ENCODE measurements at regions of chr2 and their contacts with region 1.

Region 1: DNA sequence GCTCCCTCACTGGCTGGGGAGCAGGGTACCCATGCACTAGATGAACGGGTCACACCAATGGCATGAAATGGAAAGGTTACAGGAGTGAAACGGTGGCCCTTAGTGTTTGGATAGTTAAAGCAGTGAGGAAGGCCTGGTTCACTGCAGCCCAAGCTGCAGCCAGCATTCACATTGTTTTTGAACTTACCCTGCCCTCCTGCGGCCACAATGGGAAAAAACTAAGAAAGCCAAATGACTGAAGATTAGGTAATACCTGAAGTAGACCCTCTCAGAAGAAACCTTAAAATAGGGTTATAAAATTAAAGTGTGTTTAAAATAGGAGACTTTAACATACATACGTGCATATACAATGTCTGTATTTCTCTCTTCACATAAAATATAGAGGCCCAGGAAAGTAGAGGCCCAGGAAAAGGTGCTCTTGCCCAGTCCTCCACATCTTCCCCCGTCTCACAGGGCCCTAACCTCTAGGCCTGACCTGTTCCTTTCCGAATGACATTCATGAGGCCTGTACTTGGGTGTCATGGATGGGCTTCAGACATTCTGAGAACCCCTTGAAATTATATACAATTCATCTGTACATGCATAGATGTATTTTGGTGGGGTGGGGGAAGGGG is 33.3 kb downstream of the DOK1 start:
- DNase-seq: peak; percentile 61
- H3K4me3 Mint-ChIP-seq: no peak overlapping the region
- H3K27ac Mint-ChIP-seq: peak overlapping the region; percentile 59
- H3K4me1 Mint-ChIP-seq: peaks cover 35% of the 10 kb centered on the region
- H3K27me3 Mint-ChIP-seq: peaks cover 15% of the 10 kb centered on the region

Region 2: GRCh38 chr2:74482801-74483674 is 104.7 kb before region 1 on chr2 and contains the starts of genes CCDC142 and TTC31:
- intact Hi-C with region 1: loop called (anchors 1 kb)
- DNase-seq: peak; percentile 91
- H3K4me3 Mint-ChIP-seq: peak within 1 kb of the TSS; percentile 99
- H3K27ac Mint-ChIP-seq: peak within 1 kb of the TSS; percentile 99
- H3K4me1 Mint-ChIP-seq: peaks cover 26% of the 10 kb centered on the region
- H3K27me3 Mint-ChIP-seq: no peaks in the 10 kb centered on the region
- total RNA-seq, gene CCDC142: 25.1 and 26.9 TPM in 2 replicates
- total RNA-seq, gene TTC31: 35.1 and 35.9 TPM in 2 replicates

Region 3: DNA sequence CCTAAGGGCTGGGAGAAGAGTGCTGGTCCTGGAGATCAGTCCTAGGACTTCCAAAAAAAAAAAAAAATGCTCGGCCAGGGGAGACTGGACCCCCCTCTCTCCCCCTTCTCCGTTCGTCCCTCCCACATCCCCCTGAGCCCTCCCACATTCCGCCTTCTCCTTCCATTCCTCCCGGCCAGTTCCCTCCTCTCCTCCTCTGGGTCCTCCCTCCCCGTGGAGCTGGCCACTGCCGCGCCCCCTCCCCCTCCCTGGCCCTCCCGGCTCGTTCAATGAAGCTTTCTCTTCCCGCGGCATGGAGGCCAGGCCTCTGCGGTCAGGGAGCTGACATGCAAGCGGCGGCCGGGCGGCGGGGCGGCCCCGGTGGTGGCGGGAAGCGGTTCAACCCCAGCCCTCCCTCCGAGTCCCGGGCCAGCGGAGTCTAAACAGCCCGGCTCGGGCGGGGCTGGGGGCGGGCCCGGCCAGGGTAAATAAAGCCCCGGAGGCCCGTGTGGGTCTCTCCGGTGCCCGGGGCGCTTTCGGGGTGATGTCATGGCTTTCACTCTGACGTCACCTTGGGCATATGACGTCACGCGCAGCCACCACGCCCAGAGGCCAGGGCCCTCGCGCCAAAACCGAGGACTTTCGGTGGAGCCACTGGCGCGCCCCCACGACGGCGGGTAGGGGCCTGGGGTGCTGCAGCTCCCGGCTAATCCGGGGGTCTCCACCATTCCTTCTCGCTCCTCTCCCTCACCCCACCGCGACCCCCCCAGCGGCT is 33.7 kb before region 1 on chr2 and contains the start of gene LOXL3:
- intact Hi-C with region 1: loop called (anchors 2 kb)
- DNase-seq: peak; percentile 80
- H3K4me3 Mint-ChIP-seq: peak within 1 kb of the TSS; percentile 97
- H3K27ac Mint-ChIP-seq: peak within 1 kb of the TSS; percentile 96
- H3K4me1 Mint-ChIP-seq: peaks cover 32% of the 10 kb centered on the region
- H3K27me3 Mint-ChIP-seq: no peaks in the 10 kb centered on the region
- total RNA-seq, gene LOXL3: 1.7 and 2.1 TPM in 2 replicates

Region 4: DNA sequence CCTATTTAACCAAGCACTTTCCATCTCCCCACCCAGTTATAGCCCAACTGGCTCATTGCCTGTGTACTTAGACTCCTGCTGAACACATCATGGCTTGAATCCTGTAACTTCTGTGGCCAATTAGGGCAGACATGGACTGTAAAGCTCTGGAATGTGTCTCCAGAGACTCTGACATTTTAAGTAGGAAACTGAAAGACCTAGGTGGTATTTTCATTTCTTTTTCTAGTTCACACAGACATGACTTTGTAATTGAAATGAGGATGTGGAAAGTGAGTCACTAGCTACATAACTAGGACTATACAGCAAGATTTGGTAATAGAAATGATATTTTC is 21.1 kb before region 1 on chr2:
- intact Hi-C with region 1: loop called (anchors 2 kb)
- DNase-seq: no peak
- H3K4me3 Mint-ChIP-seq: peak overlapping the region; percentile 28
- H3K27ac Mint-ChIP-seq: peak overlapping the region; percentile 76
- H3K4me1 Mint-ChIP-seq: peaks cover 50% of the 10 kb centered on the region
- H3K27me3 Mint-ChIP-seq: no peaks in the 10 kb centered on the region

Region 5: DNA sequence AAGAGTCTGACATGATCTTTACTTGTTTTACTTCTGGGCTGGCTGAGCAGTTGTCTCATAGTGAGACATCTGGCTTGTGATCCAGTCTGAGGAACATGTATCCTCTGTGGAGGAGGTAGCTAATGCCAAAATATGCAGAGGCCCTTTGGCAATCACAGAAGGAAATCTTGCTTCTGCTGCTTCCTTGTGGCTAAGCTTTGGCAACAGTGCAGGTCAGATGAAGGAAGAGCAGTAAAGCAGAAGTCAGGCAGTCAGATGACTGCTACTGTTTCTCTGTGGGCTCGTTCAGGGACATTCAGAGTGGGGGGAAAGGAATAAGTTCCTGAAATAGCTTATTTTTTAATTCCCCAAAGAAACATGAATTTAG is 10.9 kb before region 1 on chr2:
- intact Hi-C with region 1: loop called (anchors 1 kb)
- DNase-seq: no peak
- H3K4me3 Mint-ChIP-seq: no peak overlapping the region
- H3K27ac Mint-ChIP-seq: peak overlapping the region; percentile 39
- H3K4me1 Mint-ChIP-seq: peaks cover 65% of the 10 kb centered on the region
- H3K27me3 Mint-ChIP-seq: no peaks in the 10 kb centered on the region

Region 6: DNA sequence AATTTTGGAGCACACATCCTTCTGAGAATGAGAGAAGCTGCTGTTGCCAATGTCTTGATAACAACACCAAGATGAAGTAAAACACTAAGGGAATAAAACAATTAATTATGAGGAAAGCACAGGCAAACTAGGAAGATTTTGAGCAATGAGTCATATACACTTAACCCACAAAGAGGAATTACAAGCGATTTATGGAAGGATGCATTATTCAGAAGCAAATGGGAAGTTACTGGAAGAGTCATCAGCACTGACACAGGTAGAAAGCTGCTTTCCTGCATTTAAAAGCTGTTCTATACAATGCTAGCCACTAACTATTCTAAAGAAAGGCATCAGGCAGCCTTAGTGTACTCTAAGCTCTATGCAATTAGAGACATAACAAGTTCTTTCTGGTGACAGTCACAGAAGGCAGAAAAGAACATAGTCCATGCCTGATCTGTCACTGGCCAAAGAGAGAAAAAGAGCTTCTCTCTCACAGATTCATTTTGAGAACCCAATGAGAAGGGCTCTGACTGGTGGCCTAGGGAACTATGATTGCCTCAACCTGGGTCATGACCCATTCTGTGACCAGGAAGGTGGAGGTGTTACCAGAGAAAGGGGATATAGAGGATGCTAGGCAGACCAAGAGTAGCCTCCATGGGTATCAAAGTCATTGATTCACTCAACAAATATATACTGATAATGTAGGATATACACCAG is 15.0 kb after region 1 on chr2:
- intact Hi-C with region 1: no loop called
- DNase-seq: no peak
- H3K4me3 Mint-ChIP-seq: no peak overlapping the region
- H3K27ac Mint-ChIP-seq: no peak overlapping the region
- H3K4me1 Mint-ChIP-seq: peaks cover 15% of the 10 kb centered on the region
- H3K27me3 Mint-ChIP-seq: peaks cover 40% of the 10 kb centered on the region

Measured in activated T-helper 2 cell treated with anti-CD3 and anti-CD28 coated beads, Interferon-gamma antibody, Interleukin-2, Interleukin-4, amounts not matched to agents 10 μg/mL and 5 μg/mL and 100 μg/mL, durations not matched to agents 14 hours and 24 hours and 36 hours (primary cell).